Activated CD4-positive, alpha-beta T cell treated with anti-CD3 and anti-CD28 coated beads, Interleukin-2, amount 10 ng/mL, durations not matched to agents 24 days and 14 days (primary cell): ENCODE measurements at regions of chr2 and their contacts with region 1.

Region 1: GRCh38 chr2:147297820-147298219 is 547.0 kb upstream of the ACVR2A start:
- DNase-seq: peak; percentile 85
- H3K4me3 Mint-ChIP-seq: peak overlapping the region; percentile 34
- H3K27ac Mint-ChIP-seq: peak overlapping the region; percentile 83
- H3K4me1 Mint-ChIP-seq: peaks cover 52% of the 10 kb centered on the region
- H3K27me3 Mint-ChIP-seq: no peaks in the 10 kb centered on the region

Region 2: GRCh38 chr2:147182260-147182659 is 115.6 kb before region 1 on chr2:
- intact Hi-C with region 1: loop called (anchors 1 kb)
- DNase-seq: peak; percentile 86
- H3K4me3 Mint-ChIP-seq: peak overlapping the region; percentile 68
- H3K27ac Mint-ChIP-seq: peak overlapping the region; percentile 90
- H3K4me1 Mint-ChIP-seq: peaks cover 21% of the 10 kb centered on the region
- H3K27me3 Mint-ChIP-seq: peaks cover 2% of the 10 kb centered on the region

Region 3: DNA sequence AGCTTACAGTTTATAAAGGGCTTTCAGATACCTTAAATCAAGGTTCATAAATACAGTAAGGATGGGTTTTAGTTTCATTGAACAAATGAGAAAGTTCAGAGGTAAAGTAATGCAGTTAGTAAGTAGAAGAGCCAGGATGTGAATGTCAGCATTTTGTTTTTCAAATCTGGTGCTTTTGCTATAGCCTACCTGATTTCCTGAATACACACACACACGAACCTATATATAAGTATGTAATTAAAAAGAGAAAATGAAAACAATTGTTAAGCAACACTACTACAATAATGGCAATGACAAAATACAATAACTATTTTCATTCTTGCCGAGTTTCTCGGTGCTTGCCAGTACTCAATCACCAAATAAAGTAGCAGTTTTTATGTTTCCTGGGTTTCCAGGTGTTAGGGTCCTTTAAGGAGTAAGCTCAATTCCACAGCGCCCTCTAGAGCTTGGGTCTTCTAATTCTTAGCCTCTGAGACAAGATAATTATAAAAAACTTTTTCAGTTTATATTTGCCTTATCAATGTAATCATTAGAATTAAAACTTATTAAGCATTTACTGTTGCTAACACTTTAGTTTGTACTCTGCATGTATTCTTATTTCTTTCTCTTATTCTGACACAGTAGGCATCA is 34.1 kb after region 1 on chr2:
- intact Hi-C with region 1: loop called (anchors 1 kb)
- DNase-seq: peak; percentile 81
- H3K4me3 Mint-ChIP-seq: no peak overlapping the region
- H3K27ac Mint-ChIP-seq: no peak overlapping the region
- H3K4me1 Mint-ChIP-seq: peaks cover 16% of the 10 kb centered on the region
- H3K27me3 Mint-ChIP-seq: peaks cover 3% of the 10 kb centered on the region

Region 4: DNA sequence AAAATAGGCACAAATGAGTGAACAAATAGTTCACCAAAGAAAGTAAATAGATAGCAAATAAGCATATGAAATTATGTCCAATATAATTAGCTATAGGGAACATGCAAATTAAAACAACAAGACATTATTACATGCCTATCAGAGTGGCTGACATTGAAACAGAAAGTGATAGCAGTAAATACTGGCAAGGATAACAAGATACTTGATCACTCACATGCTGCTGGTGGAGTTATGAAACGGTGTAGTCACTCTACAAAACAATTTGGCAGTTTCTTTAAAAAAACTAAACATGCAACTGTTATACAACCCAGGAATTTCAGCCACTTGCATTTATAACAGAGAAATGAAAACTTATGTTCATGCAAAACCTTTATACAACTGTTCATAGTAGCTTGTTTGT is 107.8 kb after region 1 on chr2:
- intact Hi-C with region 1: no loop called
- DNase-seq: no peak
- H3K4me3 Mint-ChIP-seq: no peak overlapping the region
- H3K27ac Mint-ChIP-seq: no peak overlapping the region
- H3K4me1 Mint-ChIP-seq: peaks cover 3% of the 10 kb centered on the region
- H3K27me3 Mint-ChIP-seq: peaks cover 9% of the 10 kb centered on the region

Region 5: DNA sequence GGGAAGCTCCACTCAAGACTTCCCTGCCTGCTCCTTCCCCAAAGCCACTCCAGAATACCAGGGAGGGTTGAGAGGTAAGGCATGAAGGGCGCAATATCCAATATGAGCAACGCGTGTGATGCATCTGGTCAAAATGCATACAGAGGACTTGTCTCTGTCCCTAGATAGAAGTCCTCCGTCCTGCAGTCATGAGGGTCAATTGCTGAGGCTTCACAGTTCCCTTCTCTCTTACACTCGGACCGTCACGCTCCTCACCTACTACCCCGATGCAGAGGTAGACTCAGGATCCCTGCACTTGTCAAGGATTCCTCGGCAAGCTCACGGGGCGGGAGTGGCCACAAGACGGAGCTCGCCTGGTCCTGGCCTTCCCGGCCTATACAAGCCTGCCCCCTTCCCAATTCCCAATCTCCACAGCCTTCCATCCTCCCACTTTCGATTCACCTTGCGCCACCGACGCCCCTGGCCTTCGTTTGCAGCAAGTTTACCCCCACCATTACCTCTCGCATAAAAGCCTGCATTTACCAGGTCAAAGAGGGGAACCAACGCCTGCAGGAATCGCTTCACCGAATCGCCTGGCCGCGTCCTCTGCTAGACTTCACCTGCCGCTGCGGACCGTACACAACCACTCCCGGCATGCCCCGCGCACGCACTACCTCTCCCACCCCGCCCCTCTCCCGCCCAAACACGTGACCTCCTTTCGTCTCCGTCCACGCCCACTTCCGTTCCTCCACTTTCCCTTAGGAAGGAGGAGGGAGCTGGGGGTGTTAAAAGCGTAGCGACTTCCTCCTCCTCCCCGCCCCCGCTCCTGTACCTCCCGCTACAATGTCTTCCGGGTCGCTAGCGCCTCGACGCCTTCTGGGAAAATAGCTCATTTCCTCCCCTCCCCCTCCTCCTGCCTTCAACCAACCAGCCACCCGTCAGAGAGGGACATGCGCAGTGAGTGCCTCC is 722.6 kb after region 1 on chr2 and contains the start of gene ORC4:
- intact Hi-C with region 1: loop called (anchors 5 kb)
- DNase-seq: peak; percentile 98
- H3K4me3 Mint-ChIP-seq: peak within 1 kb of the TSS; percentile 94
- H3K27ac Mint-ChIP-seq: peak within 1 kb of the TSS; percentile 93
- H3K4me1 Mint-ChIP-seq: peaks cover 45% of the 10 kb centered on the region
- H3K27me3 Mint-ChIP-seq: no peaks in the 10 kb centered on the region
- total RNA-seq, gene ORC4: 27.0 and 36.2 TPM in 2 replicates